CD14-positive monocyte (primary cell): ENCODE measurements at regions of chr11 and their contacts with region 1.

Region 1: DNA sequence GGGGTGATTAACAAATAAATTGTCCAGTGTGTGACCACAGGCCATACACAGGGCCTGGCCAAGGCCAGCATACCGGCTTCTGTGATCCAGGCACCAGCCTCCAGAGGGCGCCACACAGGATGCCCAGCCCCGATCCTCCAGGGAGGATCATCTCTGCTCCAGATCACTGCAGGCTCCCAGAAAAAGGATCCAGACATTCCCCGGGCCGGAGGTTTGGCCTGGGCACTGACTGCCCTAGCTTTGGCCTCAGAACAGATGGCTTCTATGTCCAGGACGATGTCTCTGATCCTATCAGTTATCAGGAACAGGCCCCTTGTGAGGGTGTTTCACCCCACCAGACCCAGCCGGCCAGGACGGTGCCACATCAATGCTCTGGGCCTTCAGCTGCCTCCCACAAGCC is 74.5 kb upstream of the LMO1 start:
- DNase-seq: peak; percentile 29 to 65 (median 44)
- H3K4me3 ChIP-seq: no peak overlapping the region
- H3K4me3 Mint-ChIP-seq: no peak overlapping the region
- H3K27ac ChIP-seq: no peak overlapping the region
- H3K27ac Mint-ChIP-seq: no peak overlapping the region
- H3K4me1 ChIP-seq: peaks cover 35 to 40% of the 10 kb centered on the region in 2 donors
- H3K4me1 Mint-ChIP-seq: peaks cover 38% of the 10 kb centered on the region
- H3K27me3 ChIP-seq: no peaks in the 10 kb centered on the region
- H3K27me3 Mint-ChIP-seq: peaks cover 2 to 4% (median 3%) of the 10 kb centered on the region in 3 donors
- CTCF ChIP-seq: peak; percentile 86

Region 2: DNA sequence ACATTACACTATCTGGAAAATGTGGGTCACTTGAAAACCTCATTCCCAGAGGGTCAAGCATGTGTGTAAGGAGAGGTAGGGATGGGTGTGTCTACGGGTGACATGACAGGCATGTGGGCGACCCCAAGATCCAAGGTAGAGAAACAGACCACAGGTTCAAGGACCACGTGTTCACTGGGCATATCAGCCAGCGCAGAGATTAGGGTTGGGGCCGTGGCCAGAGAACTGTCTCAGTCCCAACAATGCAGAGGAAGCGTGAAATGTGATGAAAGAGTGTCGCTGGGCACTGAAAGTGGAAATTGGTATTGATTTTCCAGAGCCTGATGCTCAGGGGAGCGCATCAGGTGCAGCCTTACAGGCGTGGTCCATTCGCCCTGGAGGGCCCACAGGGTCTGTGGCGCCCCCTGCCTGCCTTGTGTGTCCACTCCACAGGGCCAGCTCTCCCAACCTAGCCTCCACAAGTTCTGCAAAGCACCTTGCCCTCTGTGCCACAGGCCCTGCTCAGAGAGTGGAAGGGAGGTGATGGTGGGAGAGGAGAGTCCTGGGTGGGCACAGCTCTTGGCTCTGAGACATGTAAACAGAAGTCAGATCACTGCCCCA is 19.7 kb before region 1 on chr11:
- intact Hi-C with region 1: no loop called
- DNase-seq: no peak
- H3K4me3 ChIP-seq: no peak overlapping the region
- H3K4me3 Mint-ChIP-seq: no peak overlapping the region
- H3K27ac ChIP-seq: no peak overlapping the region
- H3K27ac Mint-ChIP-seq: peak overlapping the region in 1 of 7 donors; percentile 66
- H3K4me1 ChIP-seq: no peaks in the 10 kb centered on the region
- H3K4me1 Mint-ChIP-seq: no peaks in the 10 kb centered on the region
- H3K27me3 ChIP-seq: no peaks in the 10 kb centered on the region
- H3K27me3 Mint-ChIP-seq: peaks cover 1 to 15% (median 5%) of the 10 kb centered on the region in 3 donors
- CTCF ChIP-seq: peak; percentile 16

Region 3: DNA sequence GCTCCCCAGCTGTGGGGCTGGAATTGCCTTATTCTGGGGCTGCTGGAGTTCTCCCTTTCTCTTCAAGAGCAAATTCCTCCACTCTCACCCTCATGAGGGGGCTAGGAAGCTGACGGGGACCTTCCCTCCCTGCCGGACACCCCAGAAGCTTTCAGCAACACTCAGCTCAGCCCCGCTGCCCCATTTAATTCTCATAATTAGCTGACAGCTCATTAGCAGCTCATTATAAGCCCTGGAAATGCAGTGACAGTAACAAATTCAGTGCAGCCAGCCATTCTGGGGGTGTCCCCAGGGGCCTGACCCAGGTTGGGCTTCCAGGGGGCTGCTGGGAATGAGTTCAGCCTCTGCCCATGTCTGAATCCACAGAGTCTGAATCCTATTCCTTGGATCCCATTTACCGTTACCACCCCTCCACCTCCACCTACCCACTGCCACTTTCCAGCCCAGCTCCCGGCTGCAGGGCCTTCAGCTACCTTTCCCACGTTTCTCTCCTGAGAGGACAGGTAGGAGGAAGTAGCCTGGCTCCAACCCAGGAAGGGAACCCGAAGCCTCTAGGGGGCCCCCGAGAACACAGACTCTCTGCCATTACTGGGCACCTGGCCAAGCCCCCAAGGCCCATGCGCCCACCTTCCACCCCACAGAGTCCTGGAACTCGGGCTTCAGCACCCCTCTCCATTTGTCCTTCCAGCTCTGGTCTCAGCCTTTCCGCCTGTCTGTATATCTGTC is 27.2 kb after region 1 on chr11:
- intact Hi-C with region 1: no loop called
- DNase-seq: no peak
- H3K4me3 ChIP-seq: no peak overlapping the region
- H3K4me3 Mint-ChIP-seq: no peak overlapping the region
- H3K27ac ChIP-seq: no peak overlapping the region
- H3K27ac Mint-ChIP-seq: peak overlapping the region in 3 of 7 donors; percentile 46 to 63 (median 51)
- H3K4me1 ChIP-seq: peaks cover 17 to 22% of the 10 kb centered on the region in 2 donors
- H3K4me1 Mint-ChIP-seq: peaks cover 27% of the 10 kb centered on the region
- H3K27me3 ChIP-seq: no peaks in the 10 kb centered on the region
- H3K27me3 Mint-ChIP-seq: peaks cover 0 to 1% (median 0%) of the 10 kb centered on the region in 3 donors
- CTCF ChIP-seq: no peak

Region 4: GRCh38 chr11:8688414-8689362 is 350.6 kb after region 1 on chr11:
- intact Hi-C with region 1: loop called in 1 of 2 experiments (anchors 10 kb)
- DNase-seq: peak; percentile 94 to 96 (median 94)
- H3K4me3 ChIP-seq: peak overlapping the region; percentile 60 to 85 (median 73)
- H3K4me3 Mint-ChIP-seq: peak overlapping the region; percentile 96 to 98
- H3K27ac ChIP-seq: peak overlapping the region; percentile 69 to 86
- H3K27ac Mint-ChIP-seq: peak overlapping the region; percentile 92 to 96 (median 95)
- H3K4me1 ChIP-seq: peaks cover 22 to 31% of the 10 kb centered on the region in 2 donors
- H3K4me1 Mint-ChIP-seq: peaks cover 31% of the 10 kb centered on the region
- H3K27me3 ChIP-seq: no peaks in the 10 kb centered on the region
- H3K27me3 Mint-ChIP-seq: no peaks in the 10 kb centered on the region
- CTCF ChIP-seq: no peak